ENCODE measurements at regions of chr3 and their contacts with region 1.

Region 1: GRCh38 chr3:63228087-63229023 is 49.8 kb upstream of the SYNPR start:
- DNase-seq: no peak

Region 2: DNA sequence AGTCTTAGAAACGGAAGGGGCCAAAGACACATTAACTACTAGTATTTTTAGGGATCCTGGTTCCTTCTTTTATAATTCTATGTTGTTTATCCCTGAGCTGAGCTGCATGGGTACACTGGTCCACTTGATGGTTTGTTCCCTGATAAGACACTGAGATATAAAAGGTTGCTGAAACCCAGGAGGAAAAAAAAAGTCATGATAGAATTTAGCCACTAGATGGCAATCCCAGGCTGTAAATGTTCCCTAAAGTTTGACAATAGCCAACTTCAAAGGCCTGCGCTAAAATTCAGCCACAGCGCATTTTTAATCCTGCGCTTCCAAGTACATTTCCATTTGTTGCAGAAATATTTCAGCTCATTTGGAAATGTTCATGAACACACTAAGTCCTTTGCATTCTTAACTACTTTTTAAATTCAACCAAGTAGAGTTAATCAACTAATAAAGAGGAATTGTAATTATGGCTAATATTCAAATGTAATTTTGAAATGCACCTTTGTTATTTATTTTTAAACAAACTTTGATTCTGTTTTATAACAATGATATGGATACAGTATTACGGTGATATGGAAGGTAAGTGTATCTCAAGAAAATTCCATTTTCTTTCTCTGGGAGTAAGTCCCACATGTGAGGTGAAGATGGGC is 605.7 kb before region 1 on chr3:
- intact Hi-C with region 1: loop called (anchors 2 kb)
- DNase-seq: no peak

Region 3: GRCh38 chr3:62665598-62666437 is 562.5 kb before region 1 on chr3:
- intact Hi-C with region 1: loop called (anchors 2 kb)
- DNase-seq: no peak

Region 4: DNA sequence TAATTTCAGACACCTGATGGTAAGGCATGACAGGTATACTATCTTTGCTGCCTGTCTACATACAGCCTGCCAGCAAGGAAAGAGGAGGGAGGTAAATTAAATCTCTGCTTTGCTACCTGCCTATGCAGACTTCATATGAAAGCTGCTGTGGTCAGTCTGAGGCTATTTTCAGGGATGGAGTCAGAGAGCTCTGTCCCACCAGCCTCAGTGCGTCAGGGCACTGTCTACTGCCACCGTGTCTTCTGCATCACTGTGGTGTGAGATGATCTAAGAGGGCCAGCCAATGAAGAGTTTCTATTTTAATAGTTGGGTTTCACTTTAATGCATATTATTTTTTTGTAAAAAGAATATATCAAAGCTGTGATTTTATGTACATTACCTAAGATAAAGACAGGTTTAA is 478.7 kb before region 1 on chr3:
- intact Hi-C with region 1: loop called (anchors 5 kb)
- DNase-seq: no peak

Region 5: GRCh38 chr3:63274359-63274758 is 46.0 kb after region 1 on chr3:
- intact Hi-C with region 1: no loop called
- DNase-seq: no peak